Dendritic cell treated with granulocyte-macrophage colony-stimulating factor and Interleukin-4, amounts not matched to agents 40 ng/mL and 50 ng/mL, for 4 days (primary cell): ENCODE measurements at regions of chr9 and their contacts with region 1.

Region 1: DNA sequence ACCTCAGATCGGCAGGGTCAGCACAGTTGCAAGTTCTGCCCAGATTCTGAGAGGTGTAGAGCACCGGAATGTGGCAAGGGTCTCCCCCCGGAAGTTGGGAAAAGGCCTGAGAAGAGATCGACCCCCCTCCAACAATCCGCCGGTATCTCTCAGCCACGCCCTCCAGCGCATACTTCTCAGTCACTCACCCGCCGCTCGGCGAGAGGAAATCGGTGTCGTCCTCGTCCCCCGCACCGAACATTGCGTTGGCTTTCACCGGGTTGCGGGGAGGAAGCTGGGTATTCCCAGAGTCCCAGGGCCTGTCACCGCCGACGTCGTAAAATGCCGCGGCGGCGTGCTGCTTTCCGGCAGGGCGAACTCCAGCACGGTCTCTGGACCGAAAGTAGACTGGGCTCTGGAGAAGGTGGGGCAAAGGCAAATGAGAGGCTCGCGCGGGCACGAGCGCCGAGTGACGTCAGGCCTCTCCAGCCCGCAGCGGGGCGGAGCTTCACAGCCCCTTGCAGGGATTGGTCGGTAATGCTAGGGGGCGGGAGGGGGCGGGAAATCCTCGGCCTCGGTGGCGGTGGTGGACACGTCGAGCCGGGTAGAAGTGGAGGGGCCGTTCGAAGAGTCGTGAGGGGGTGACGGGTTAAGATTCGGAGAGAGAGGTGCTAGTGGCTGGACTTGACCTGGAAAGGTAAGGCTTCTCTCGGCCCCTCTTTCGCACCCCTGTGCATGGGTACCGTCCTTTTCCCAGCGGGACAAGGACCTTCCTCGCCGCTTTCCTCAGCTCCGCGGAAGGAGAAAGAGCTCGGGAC is at the starts of genes FKBP15 and SLC31A1:
- H3K4me3 Mint-ChIP-seq: peak within 1 kb of the TSS; percentile 95
- H3K27ac Mint-ChIP-seq: peak within 1 kb of the TSS; percentile 95
- H3K4me1 Mint-ChIP-seq: peaks cover 29% of the 10 kb centered on the region
- H3K27me3 Mint-ChIP-seq: no peaks in the 10 kb centered on the region

Region 2: GRCh38 chr9:113150670-113151611 is 70.3 kb before region 1 on chr9 and contains the start of gene SLC31A2:
- intact Hi-C with region 1: loop called (anchors 2 kb)
- H3K4me3 Mint-ChIP-seq: peak within 1 kb of the TSS; percentile 90
- H3K27ac Mint-ChIP-seq: peak within 1 kb of the TSS; percentile 99
- H3K4me1 Mint-ChIP-seq: peaks cover 63% of the 10 kb centered on the region
- H3K27me3 Mint-ChIP-seq: peaks cover 1% of the 10 kb centered on the region

Region 3: DNA sequence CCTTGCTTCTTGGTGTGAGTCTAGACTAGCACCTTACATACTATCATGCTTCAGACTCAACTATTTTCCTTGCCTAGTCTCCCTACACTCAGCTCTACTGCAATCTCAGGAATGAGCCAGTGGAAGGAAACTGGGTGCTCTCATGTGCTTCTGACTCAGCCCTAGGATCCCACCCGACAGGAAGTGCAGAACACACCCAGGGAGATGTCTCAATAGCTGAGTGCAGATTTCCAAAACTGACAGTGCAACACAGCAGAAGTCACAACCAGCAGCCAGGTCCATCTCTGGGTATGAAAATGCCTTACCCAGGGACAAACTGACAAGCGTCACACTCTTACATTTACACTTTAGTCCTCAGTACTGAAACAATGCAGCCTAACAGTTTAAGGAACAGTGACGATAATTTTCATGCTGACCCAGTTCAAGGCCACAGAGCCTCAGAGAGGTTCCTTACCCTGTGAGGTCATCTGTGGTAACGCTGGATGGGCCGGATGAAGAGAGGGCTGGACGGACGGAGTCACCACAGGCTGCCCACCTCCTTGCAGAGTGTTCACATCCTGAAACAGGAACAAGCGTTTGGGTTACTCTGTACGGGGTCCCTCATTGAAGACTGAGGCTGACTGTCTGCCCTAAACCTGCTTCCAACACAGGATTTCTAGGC is 33.1 kb before region 1 on chr9:
- intact Hi-C with region 1: loop called (anchors 5 kb)
- H3K4me3 Mint-ChIP-seq: peak overlapping the region; percentile 73
- H3K27ac Mint-ChIP-seq: peak overlapping the region; percentile 89
- H3K4me1 Mint-ChIP-seq: peaks cover 66% of the 10 kb centered on the region
- H3K27me3 Mint-ChIP-seq: no peaks in the 10 kb centered on the region

Region 4: GRCh38 chr9:113205861-113206260 is 15.3 kb before region 1 on chr9:
- intact Hi-C with region 1: loop called (anchors 1 kb)
- H3K4me3 Mint-ChIP-seq: no peak overlapping the region
- H3K27ac Mint-ChIP-seq: no peak overlapping the region
- H3K4me1 Mint-ChIP-seq: peaks cover 51% of the 10 kb centered on the region
- H3K27me3 Mint-ChIP-seq: no peaks in the 10 kb centered on the region

Region 5: GRCh38 chr9:113231701-113232100 is 10.5 kb after region 1 on chr9:
- intact Hi-C with region 1: loop called (anchors 1 kb)
- H3K4me3 Mint-ChIP-seq: no peak overlapping the region
- H3K27ac Mint-ChIP-seq: peak overlapping the region; percentile 88
- H3K4me1 Mint-ChIP-seq: peaks cover 46% of the 10 kb centered on the region
- H3K27me3 Mint-ChIP-seq: no peaks in the 10 kb centered on the region